ENCODE measurements at regions of chr11 and their contacts with region 1.

Region 1: GRCh38 chr11:63838678-63839507 is at the start of gene MARK2:
- DNase-seq: peak; percentile 99
- H3K4me3 Mint-ChIP-seq: peak within 1 kb of the TSS; percentile 88
- H3K27ac Mint-ChIP-seq: peak within 1 kb of the TSS; percentile 83
- H3K4me1 Mint-ChIP-seq: peaks cover 59% of the 10 kb centered on the region
- H3K27me3 Mint-ChIP-seq: peaks cover 5% of the 10 kb centered on the region
- total RNA-seq, gene MARK2: 44.7 and 46.0 TPM in 2 replicates

Region 2: DNA sequence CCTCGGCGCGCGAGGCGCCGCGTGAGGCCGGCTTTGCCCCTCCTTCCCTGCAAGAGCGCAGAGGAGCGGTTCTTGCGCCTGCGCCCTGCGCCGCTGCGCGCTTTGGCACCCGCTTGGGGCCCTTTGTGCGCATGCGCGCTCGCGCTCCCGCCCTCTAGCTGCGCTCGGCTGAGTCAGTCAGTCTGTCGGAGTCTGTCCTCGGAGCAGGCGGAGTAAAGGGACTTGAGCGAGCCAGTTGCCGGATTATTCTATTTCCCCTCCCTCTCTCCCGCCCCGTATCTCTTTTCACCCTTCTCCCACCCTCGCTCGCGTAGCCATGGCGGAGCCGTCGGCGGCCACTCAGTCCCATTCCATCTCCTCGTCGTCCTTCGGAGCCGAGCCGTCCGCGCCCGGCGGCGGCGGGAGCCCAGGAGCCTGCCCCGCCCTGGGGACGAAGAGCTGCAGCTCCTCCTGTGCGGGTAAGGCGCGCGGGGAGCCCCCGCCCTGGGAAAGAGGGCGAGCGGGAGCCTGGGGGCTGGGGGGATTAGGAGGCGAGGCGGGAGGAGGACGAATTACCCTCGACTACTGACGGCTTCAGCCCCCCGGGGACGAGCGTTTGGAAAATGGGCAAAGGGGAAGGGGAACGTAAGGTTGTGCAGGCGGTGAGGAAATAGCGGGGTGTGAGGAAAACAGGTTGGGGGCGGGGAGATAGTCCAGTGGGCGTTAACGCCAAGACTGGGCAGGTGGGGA is 157.4 kb before region 1 on chr11 and contains the start of gene RTN3:
- intact Hi-C with region 1: loop called (anchors 1 kb)
- DNase-seq: peak; percentile 100
- H3K4me3 Mint-ChIP-seq: peak within 1 kb of the TSS; percentile 91
- H3K27ac Mint-ChIP-seq: peak within 1 kb of the TSS; percentile 91
- H3K4me1 Mint-ChIP-seq: peaks cover 32% of the 10 kb centered on the region
- H3K27me3 Mint-ChIP-seq: peaks cover 11% of the 10 kb centered on the region
- total RNA-seq, gene RTN3: 52.1 and 54.7 TPM in 2 replicates

Region 3: DNA sequence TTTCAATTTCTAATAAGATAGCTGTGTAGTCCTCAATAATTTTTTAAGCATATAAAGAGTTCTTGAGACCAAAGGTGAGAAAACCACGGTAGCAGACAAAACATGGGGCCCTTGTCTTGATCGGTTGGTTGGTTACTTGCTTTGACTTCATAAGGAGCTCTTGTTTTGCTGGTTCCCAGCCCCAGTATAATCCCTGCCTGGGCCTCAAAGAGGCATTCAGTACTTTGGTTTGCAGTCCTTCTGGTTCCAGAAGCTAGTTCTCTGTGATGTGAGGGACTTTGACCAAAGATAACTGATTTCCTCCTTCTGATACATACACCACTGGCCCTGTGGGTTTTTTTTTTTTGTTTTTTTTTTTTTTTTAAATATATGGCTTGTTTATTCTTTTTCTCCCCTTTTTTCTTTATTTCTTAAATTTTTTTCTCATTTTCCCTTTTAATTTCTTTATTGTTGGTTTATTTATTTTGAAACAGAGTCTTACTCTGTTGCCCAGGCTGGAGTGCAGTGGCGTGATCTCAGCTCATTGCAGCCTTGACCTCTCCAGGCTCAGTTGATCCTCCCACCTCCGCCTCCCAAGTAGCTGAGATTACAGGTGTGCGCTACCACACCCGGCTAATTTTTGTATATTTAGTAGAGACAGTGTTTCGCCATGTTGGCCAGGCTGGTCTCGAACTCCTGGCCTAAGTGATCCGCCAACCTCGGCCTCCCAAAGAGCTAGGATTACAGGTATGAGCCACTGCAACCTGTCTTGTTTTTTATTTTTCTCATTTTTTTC is 17.3 kb after region 1 on chr11:
- intact Hi-C with region 1: loop called (anchors 1 kb)
- DNase-seq: no peak
- H3K4me3 Mint-ChIP-seq: no peak overlapping the region
- H3K27ac Mint-ChIP-seq: no peak overlapping the region
- H3K4me1 Mint-ChIP-seq: peaks cover 29% of the 10 kb centered on the region
- H3K27me3 Mint-ChIP-seq: no peaks in the 10 kb centered on the region

Region 4: GRCh38 chr11:63888170-63889086 is 49.5 kb after region 1 on chr11:
- intact Hi-C with region 1: loop called (anchors 1 kb)
- DNase-seq: peak; percentile 57
- H3K4me3 Mint-ChIP-seq: peak overlapping the region; percentile 86
- H3K27ac Mint-ChIP-seq: peak overlapping the region; percentile 83
- H3K4me1 Mint-ChIP-seq: peaks cover 77% of the 10 kb centered on the region
- H3K27me3 Mint-ChIP-seq: no peaks in the 10 kb centered on the region

Region 5: GRCh38 chr11:63945477-63946163 is 106.7 kb after region 1 on chr11:
- intact Hi-C with region 1: loop called (anchors 1 kb)
- DNase-seq: peak; percentile 35
- H3K4me3 Mint-ChIP-seq: no peak overlapping the region
- H3K27ac Mint-ChIP-seq: no peak overlapping the region
- H3K4me1 Mint-ChIP-seq: peaks cover 10% of the 10 kb centered on the region
- H3K27me3 Mint-ChIP-seq: no peaks in the 10 kb centered on the region

Region 6: GRCh38 chr11:64048042-64048854 is 209.4 kb after region 1 on chr11:
- intact Hi-C with region 1: no loop called
- DNase-seq: no peak
- H3K4me3 Mint-ChIP-seq: no peak overlapping the region
- H3K27ac Mint-ChIP-seq: no peak overlapping the region
- H3K4me1 Mint-ChIP-seq: no peaks in the 10 kb centered on the region
- H3K27me3 Mint-ChIP-seq: no peaks in the 10 kb centered on the region

Region 7: DNA sequence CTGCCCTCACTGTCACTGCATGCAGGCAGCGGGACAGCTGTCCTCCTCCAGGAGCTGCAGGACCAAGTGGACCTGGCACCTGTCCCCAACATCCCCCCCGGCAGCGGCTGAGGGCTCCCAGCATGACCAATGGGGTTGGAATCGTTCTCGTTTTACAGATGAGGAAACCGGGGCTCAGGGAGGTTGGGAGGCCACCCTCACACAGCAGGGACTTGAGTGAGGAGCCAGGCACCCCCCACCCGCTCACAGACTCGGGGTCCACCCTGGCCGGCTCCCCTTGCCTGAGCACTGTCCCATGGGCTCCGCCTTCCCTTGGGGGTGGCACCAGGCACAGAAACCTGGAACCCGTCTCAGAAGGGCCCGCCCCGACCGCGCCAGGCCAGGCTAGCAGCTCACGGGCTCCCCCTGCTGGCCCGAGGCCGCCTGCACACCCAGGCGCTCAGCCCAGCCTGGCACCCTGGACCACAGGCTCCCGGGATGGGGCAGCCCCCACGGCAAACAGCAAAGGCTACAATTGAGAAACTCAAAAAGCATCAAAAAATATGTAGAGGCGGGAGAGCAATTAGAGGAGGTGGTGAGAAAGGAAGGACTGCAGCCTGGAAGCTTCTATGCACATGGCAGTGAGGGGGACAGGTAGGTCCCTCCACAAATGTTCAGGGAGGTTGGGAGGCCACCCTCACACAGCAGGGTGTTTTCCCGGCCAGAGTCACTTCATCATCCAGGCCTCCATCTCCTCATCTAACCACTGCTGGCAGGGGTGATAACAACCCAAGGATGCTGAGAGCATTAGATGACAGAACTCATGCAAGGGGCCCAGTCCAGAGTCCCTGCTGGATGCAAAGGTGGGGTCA is 314.2 kb after region 1 on chr11:
- intact Hi-C with region 1: loop called (anchors 1 kb)
- DNase-seq: peak; percentile 72
- H3K4me3 Mint-ChIP-seq: no peak overlapping the region
- H3K27ac Mint-ChIP-seq: no peak overlapping the region
- H3K4me1 Mint-ChIP-seq: no peaks in the 10 kb centered on the region
- H3K27me3 Mint-ChIP-seq: no peaks in the 10 kb centered on the region